ENCODE measurements at regions of chr7 and their contacts with region 1.

Region 1: GRCh38 chr7:110733221-110733620 is 357.7 kb upstream of the LRRN3 start:
- DNase-seq: no peak
- H3K4me3 Mint-ChIP-seq: no peak overlapping the region
- H3K27ac Mint-ChIP-seq: no peak overlapping the region
- H3K4me1 Mint-ChIP-seq: no peaks in the 10 kb centered on the region
- H3K27me3 Mint-ChIP-seq: no peaks in the 10 kb centered on the region

Region 2: GRCh38 chr7:110432061-110432553 is 301.1 kb before region 1 on chr7:
- CTCF ChIA-PET with region 1: no interaction called
- intact Hi-C with region 1: no loop called
- DNase-seq: no peak
- H3K4me3 Mint-ChIP-seq: no peak overlapping the region
- H3K27ac Mint-ChIP-seq: no peak overlapping the region
- H3K4me1 Mint-ChIP-seq: no peaks in the 10 kb centered on the region
- H3K27me3 Mint-ChIP-seq: no peaks in the 10 kb centered on the region

Region 3: DNA sequence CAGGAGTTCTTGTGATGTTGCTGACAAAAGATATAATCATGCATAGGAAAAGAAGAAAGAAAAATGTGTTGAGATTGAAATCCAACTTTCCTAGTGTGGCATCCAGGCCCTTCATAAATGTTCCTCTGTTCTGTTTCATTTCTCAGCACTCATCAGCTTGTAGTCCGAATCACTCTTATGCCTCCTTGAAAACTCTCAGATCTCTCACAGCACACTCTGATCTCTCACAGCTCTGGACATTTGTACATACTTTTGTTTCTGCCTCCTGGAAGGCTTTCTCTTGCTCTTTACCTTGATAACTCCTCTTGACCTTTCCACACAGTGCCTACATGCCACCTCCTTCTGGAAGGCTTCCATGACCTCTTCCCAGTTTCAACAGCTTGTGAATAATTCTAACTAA is 51.3 kb before region 1 on chr7:
- CTCF ChIA-PET with region 1: no interaction called
- intact Hi-C with region 1: loop called (anchors 5 kb)
- DNase-seq: no peak
- H3K4me3 Mint-ChIP-seq: no peak overlapping the region
- H3K27ac Mint-ChIP-seq: no peak overlapping the region
- H3K4me1 Mint-ChIP-seq: no peaks in the 10 kb centered on the region
- H3K27me3 Mint-ChIP-seq: no peaks in the 10 kb centered on the region